ENCODE measurements at regions of chr14 and their contacts with region 1.

Region 1: GRCh38 chr14:85156319-85156718 is 373.6 kb upstream of the FLRT2 start:
- DNase-seq: no peak
- ATAC-seq: no peak
- H3K4me3 ChIP-seq: no peak overlapping the region
- H3K27ac ChIP-seq: no peak overlapping the region
- H3K4me1 ChIP-seq: no peaks in the 10 kb centered on the region
- H3K27me3 ChIP-seq: no peaks in the 10 kb centered on the region
- CTCF ChIP-seq: no peak

Region 2: GRCh38 chr14:85142982-85143381 is 13.3 kb before region 1 on chr14:
- intact Hi-C with region 1: loop called in 1 of 10 experiments (anchors 2 kb)
- DNase-seq: no peak
- ATAC-seq: no peak
- H3K4me3 ChIP-seq: no peak overlapping the region
- H3K27ac ChIP-seq: no peak overlapping the region
- H3K4me1 ChIP-seq: no peaks in the 10 kb centered on the region
- H3K27me3 ChIP-seq: no peaks in the 10 kb centered on the region
- CTCF ChIP-seq: no peak

Measured in heart right ventricle (tissue), 16 donors.